Mammary epithelial cell (primary cell): ENCODE measurements at regions of chr18 and their contacts with region 1.

Region 1: DNA sequence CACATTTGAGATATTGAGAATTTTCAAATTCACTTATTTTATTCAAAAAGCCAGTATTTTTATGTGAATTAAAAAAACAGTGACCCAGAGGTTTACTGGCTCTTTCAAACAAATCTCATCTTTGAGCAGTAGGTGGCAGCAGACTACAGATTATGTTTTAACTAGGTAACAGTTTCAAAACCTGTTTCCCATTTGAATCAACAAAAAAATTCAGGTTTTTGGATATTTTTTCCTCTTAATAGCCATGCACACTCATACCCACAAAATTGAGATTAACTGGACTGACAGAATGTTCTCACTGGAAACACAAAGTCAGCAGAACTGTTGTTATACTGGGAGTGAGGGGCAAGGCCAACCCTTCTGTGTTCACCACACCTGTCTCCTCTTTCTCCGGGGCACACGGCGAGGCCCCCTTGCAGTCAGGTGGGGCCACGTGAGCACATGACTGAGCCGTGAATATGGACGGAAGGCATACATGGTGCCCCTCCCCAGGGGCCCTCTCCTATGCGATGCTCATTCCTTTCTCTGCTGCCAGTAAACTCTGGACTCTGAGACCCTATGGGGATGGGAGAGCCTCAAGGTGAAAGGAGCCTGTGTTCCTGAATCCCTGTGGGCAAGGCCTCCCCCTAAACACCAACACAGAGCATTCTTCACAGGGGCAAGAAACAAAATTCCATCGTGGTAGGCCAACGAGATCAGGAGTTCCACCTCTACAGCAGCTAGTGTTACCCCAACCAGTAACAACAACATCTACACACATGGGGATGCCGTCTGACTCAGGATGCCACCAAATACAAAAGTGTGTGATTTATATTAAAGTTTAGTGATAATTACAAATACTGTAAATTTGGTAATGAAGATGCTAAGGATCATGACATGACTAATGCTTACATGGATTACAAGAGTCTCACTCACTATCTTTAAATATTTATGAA is 80.4 kb downstream of the LPIN2 start:
- DNase-seq: peak; percentile 29
- H3K4me3 ChIP-seq: no peak overlapping the region
- H3K27ac ChIP-seq: no peak overlapping the region
- H3K4me1 ChIP-seq: no peaks in the 10 kb centered on the region
- H3K27me3 ChIP-seq: no peaks in the 10 kb centered on the region
- CTCF ChIP-seq: peak; percentile 61 to 65

Region 2: DNA sequence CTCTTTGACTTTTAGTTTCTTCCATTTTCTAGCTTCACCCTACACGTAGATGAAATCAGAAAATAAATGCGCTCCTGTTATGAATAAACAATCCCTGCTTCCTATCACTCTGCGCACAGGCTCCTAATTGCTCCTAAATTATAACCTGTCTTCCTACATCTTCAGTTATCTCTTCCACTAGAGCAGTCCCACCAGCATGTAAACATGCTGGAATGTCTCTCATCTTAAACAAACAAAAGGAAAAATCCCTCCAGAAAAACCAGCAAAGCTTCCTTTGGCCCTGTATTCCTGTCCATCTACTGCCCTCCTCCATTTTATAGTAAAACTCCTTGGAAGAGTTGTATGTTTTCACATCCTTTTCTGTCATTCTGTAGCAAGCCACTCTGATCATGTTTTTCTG is 190.9 kb before region 1 on chr18:
- CTCF ChIA-PET with region 1: no interaction called
- dilution Hi-C with region 1: no loop called
- in situ Hi-C with region 1: no loop called
- intact Hi-C with region 1: no loop called
- DNase-seq: no peak
- H3K4me3 ChIP-seq: no peak overlapping the region
- H3K27ac ChIP-seq: no peak overlapping the region
- H3K4me1 ChIP-seq: no peaks in the 10 kb centered on the region
- H3K27me3 ChIP-seq: no peaks in the 10 kb centered on the region
- CTCF ChIP-seq: no peak

Region 3: DNA sequence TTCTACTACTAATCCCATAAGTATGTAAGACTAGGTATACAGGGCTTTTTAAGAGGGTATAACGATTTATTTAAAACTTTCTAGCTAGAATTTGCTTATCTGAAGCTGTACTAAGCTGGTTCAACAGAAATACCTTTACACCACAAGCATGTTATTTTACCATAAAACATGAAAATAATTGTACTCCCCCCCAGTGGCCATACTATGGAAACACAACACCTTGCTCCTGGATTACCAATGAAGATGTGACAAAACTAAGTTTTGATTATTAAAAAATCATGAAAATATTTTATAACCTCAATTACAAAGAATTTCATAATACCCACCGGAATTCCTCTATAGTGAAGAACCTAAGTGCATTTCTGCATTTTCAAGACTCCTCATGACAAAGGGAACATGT is 53.1 kb after region 1 on chr18:
- CTCF ChIA-PET with region 1: no interaction called
- dilution Hi-C with region 1: no loop called
- in situ Hi-C with region 1: no loop called
- intact Hi-C with region 1: loop called (anchors 1 kb)
- DNase-seq: peak; percentile 13
- H3K4me3 ChIP-seq: no peak overlapping the region
- H3K27ac ChIP-seq: no peak overlapping the region
- H3K4me1 ChIP-seq: peaks cover 8% of the 10 kb centered on the region
- H3K27me3 ChIP-seq: no peaks in the 10 kb centered on the region
- CTCF ChIP-seq: peak; percentile 47 to 48

Region 4: DNA sequence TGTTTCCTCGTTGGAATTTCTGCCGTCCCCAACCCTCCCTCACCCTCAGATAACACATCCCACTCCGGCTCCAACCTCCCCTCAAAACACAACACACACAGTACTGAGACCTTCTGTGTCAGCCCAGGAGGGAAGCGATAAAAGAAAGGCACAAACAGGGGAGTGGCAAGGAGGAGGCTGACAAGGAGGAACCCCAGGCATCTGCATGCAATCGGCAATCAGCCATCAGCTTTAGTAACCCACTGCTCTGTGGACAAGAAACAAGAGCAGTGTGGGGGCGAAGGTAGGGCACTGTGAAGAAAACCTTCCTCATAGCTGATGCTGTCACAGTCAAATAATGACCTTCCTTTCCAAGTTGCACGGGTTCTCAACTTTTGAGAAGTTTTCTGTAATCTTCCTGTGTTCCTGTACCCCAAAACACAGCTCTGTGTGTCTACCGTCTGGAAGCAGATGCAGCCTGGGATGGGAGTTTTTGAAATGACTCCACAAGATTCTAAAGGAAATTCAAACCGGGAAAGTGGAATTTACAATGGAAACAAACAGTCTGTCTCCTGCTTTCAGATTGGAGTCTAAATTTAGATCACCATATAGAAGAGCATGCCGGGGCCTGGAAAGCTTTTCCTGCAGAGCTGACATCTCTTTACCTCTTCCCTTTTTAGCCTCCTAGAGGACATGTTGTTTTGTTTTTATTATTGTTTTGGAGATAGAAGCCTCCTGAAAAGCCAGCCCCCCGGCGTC is 96.9 kb after region 1 on chr18:
- CTCF ChIA-PET with region 1: no interaction called
- dilution Hi-C with region 1: no loop called
- in situ Hi-C with region 1: no loop called
- intact Hi-C with region 1: no loop called
- DNase-seq: no peak
- H3K4me3 ChIP-seq: no peak overlapping the region
- H3K27ac ChIP-seq: no peak overlapping the region
- H3K4me1 ChIP-seq: no peaks in the 10 kb centered on the region
- H3K27me3 ChIP-seq: no peaks in the 10 kb centered on the region
- CTCF ChIP-seq: no peak

Region 5: DNA sequence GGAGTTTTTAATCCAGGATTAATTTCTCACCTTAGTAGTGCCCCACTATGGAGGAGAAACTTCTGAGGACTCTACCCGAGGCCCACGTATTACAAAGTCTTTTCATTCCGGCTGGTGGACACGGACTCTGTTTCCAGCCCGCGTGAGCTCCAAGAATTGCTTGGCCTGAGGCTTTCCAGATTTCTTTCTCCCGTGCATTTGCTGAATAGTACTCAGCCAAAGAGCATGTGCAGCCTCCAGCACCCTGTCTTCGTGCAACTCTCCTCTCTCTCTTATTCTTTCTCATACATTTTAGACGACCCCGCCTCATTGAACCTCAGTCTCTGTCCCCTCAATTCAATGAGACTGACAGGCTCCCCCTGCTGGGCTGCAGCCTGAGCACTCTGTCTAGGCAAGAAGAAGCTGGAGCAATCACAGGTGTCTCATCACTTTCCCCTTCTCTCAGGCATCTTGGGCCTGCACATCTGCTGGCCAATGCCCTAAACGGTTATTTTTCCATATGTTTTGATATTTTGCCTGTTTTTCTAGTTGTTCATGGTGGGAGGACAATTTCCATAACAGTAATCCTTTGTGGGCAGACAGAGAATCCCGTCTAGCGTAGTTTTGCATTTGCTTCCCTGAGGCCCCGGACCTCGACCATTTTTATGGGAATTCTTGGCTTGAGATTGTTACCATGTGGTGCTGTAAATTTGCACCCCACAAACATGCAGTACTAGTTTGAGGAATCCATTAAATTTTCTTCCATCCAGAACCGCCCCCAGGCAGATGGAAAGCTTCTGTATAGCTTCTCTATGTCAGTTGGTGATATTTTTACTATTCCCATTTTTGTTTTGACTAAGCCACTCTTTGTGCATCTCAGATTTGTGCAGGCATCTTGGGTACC is 130.5 kb after region 1 on chr18:
- CTCF ChIA-PET with region 1: no interaction called
- dilution Hi-C with region 1: no loop called
- in situ Hi-C with region 1: no loop called
- intact Hi-C with region 1: loop called (anchors 1 kb)
- DNase-seq: peak; percentile 21
- H3K4me3 ChIP-seq: no peak overlapping the region
- H3K27ac ChIP-seq: no peak overlapping the region
- H3K4me1 ChIP-seq: no peaks in the 10 kb centered on the region
- H3K27me3 ChIP-seq: no peaks in the 10 kb centered on the region
- CTCF ChIP-seq: peak; percentile 67 to 84

Region 6: GRCh38 chr18:3129053-3129864 is 196.7 kb after region 1 on chr18:
- CTCF ChIA-PET with region 1: no interaction called
- dilution Hi-C with region 1: no loop called
- in situ Hi-C with region 1: loop called in 1 of 2 experiments (anchors 25 kb)
- intact Hi-C with region 1: loop called (anchors 1 kb)
- DNase-seq: peak; percentile 54
- H3K4me3 ChIP-seq: no peak overlapping the region
- H3K27ac ChIP-seq: no peak overlapping the region
- H3K4me1 ChIP-seq: no peaks in the 10 kb centered on the region
- H3K27me3 ChIP-seq: no peaks in the 10 kb centered on the region
- CTCF ChIP-seq: peak; percentile 79 to 87

Region 7: GRCh38 chr18:3151399-3152264 is 219.1 kb after region 1 on chr18:
- CTCF ChIA-PET with region 1: no interaction called
- dilution Hi-C with region 1: no loop called
- in situ Hi-C with region 1: loop called in 1 of 2 experiments (anchors 25 kb)
- intact Hi-C with region 1: loop called (anchors 1 kb)
- DNase-seq: no peak
- H3K4me3 ChIP-seq: no peak overlapping the region
- H3K27ac ChIP-seq: no peak overlapping the region
- H3K4me1 ChIP-seq: peaks cover 4% of the 10 kb centered on the region
- H3K27me3 ChIP-seq: no peaks in the 10 kb centered on the region
- CTCF ChIP-seq: peak; percentile 61 to 76